CD4-positive, alpha-beta memory T cell (primary cell): ENCODE measurements at regions of chr13 and their contacts with region 1.

Region 1: DNA sequence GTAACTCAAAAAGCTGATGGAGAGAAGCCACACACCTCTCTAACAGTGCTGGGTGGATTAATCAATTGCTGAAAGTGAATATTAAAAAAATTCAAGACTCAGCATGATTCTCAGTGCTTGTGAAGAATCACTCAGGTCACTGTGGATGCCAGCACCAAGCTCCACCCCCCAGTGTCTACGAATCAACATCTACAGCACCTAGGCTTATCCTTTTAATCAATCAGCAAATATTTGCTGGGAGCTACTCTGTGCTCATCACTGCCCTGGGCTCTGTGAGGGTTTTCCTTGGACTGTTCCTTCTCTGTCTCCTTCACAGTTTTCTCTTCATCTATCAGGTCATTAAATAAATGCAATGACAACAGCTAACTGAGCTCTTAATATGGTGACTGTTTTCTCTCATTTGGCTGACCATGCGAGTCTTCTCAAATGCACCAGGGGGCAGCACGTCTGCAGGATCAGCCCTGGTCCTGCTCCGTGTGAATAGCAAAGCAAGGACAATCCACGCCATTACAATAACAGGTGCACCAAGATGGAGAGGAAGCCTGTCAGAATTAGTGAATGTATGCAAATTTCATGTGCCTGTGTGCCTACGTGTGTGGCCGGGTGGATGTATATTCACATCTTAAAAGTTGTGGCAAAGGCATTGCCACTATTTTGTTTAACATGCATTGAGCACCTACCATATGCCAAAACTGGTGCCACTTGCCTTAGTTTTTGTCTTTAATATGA is 14.6 kb upstream of the C13orf42 start:
- DNase-seq: peak in 4 of 5 donors; percentile 23 to 40 (median 26)
- H3K4me3 ChIP-seq: no peak overlapping the region
- H3K4me3 Mint-ChIP-seq: no peak overlapping the region
- H3K27ac ChIP-seq: no peak overlapping the region
- H3K27ac Mint-ChIP-seq: peak overlapping the region in 1 of 7 donors; percentile 4
- H3K4me1 ChIP-seq: peaks cover 10% of the 10 kb centered on the region
- H3K4me1 Mint-ChIP-seq: peaks cover 8 to 13% (median 12%) of the 10 kb centered on the region in 4 donors
- H3K27me3 ChIP-seq: no peaks in the 10 kb centered on the region
- H3K27me3 Mint-ChIP-seq: peaks cover 6 to 14% of the 10 kb centered on the region in 2 donors

Region 2: DNA sequence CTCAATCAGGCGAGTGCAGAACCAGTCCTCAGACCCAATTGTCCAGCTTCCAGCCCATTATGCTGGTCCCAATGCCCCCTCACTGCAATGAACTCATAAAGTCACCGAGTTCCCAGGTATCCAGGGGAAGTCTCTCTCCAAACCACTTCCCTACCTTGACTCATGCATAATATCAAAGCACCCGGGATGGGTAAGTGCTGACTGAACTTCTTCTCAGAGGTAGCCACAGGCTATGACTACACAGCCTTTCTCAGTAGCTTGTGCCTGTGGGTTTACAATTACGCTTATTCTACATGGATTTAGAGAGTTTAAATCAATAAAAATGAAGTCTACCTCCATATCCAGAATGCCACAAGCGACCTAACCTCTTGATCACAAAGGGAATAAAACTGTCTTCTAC is 12.9 kb before region 1 on chr13:
- CTCF ChIA-PET with region 1: interaction called, 13 read pairs
- POLR2A ChIA-PET with region 1: no interaction called
- intact Hi-C with region 1: no loop called
- DNase-seq: no peak
- H3K4me3 ChIP-seq: no peak overlapping the region
- H3K4me3 Mint-ChIP-seq: no peak overlapping the region
- H3K27ac ChIP-seq: no peak overlapping the region
- H3K27ac Mint-ChIP-seq: no peak overlapping the region
- H3K4me1 ChIP-seq: no peaks in the 10 kb centered on the region
- H3K4me1 Mint-ChIP-seq: no peaks in the 10 kb centered on the region
- H3K27me3 ChIP-seq: no peaks in the 10 kb centered on the region
- H3K27me3 Mint-ChIP-seq: peaks cover 8 to 12% of the 10 kb centered on the region in 2 donors